CD4-positive, alpha-beta memory T cell (primary cell): ENCODE measurements at regions of chr20 and their contacts with region 1.

Region 1: DNA sequence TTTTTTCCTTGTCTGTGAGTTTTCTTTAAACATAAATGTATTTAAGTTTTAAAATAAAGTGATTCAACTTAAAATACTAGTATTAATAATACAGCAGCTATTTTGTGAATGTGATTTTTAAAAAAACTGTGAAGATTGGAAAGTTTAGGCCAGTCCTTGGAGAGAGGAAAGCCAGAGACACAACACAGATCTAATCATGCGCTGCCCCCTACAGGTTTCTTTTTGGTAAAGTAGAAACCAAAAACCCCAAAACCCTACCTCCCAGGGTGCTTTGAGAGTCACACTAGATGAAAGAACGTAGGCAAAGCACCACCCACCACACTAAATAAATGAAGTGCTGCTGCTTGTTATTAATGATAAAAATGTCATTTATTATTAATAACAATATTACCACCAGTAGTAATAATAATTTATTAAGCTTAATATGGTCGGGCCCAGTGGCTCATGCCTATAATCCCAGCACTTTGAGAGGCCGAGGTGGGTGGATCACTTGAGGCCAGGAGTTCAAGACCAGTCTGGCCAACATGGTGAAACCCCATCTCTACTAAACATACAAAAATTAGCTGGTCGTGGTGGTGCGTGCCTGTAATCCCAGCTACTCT is 33.7 kb downstream of the SLC9A8 start:
- DNase-seq: peak; percentile 51 to 65 (median 61)
- H3K4me3 ChIP-seq: no peak overlapping the region
- H3K4me3 Mint-ChIP-seq: no peak overlapping the region
- H3K27ac ChIP-seq: no peak overlapping the region
- H3K27ac Mint-ChIP-seq: no peak overlapping the region
- H3K4me1 ChIP-seq: peaks cover 12% of the 10 kb centered on the region
- H3K4me1 Mint-ChIP-seq: peaks cover 5 to 17% (median 12%) of the 10 kb centered on the region in 4 donors
- H3K27me3 ChIP-seq: no peaks in the 10 kb centered on the region
- H3K27me3 Mint-ChIP-seq: no peaks in the 10 kb centered on the region

Region 2: GRCh38 chr20:49534255-49534712 is 312.0 kb before region 1 on chr20:
- CTCF ChIA-PET with region 1: no interaction called
- POLR2A ChIA-PET with region 1: no interaction called
- intact Hi-C with region 1: loop called (anchors 5 kb)
- DNase-seq: peak; percentile 39 to 54 (median 43)
- H3K4me3 ChIP-seq: no peak overlapping the region
- H3K4me3 Mint-ChIP-seq: peak overlapping the region in 2 of 8 donors; percentile 40 to 61
- H3K27ac ChIP-seq: no peak overlapping the region
- H3K27ac Mint-ChIP-seq: peak overlapping the region in 1 of 7 donors; percentile 18
- H3K4me1 ChIP-seq: peaks cover 11% of the 10 kb centered on the region
- H3K4me1 Mint-ChIP-seq: peaks cover 4 to 15% (median 11%) of the 10 kb centered on the region in 4 donors
- H3K27me3 ChIP-seq: no peaks in the 10 kb centered on the region
- H3K27me3 Mint-ChIP-seq: peaks cover 2 to 6% of the 10 kb centered on the region in 2 donors

Region 3: GRCh38 chr20:49610701-49611538 is 235.4 kb before region 1 on chr20:
- CTCF ChIA-PET with region 1: interaction called, 70 read pairs
- POLR2A ChIA-PET with region 1: no interaction called
- intact Hi-C with region 1: loop called (anchors 1 kb)
- DNase-seq: peak; percentile 67 to 75 (median 69)
- H3K4me3 ChIP-seq: no peak overlapping the region
- H3K4me3 Mint-ChIP-seq: peak overlapping the region; percentile 29 to 66 (median 48)
- H3K27ac ChIP-seq: no peak overlapping the region
- H3K27ac Mint-ChIP-seq: peak overlapping the region in 2 of 7 donors; percentile 25 to 35
- H3K4me1 ChIP-seq: peaks cover 14% of the 10 kb centered on the region
- H3K4me1 Mint-ChIP-seq: peaks cover 11 to 17% (median 15%) of the 10 kb centered on the region in 4 donors
- H3K27me3 ChIP-seq: no peaks in the 10 kb centered on the region
- H3K27me3 Mint-ChIP-seq: peaks cover 6% of the 10 kb centered on the region in 2 donors

Region 4: GRCh38 chr20:49668181-49668877 is 178.0 kb before region 1 on chr20:
- CTCF ChIA-PET with region 1: interaction called, 11 read pairs
- POLR2A ChIA-PET with region 1: no interaction called
- intact Hi-C with region 1: no loop called
- DNase-seq: peak; percentile 75 to 93 (median 80)
- H3K4me3 ChIP-seq: peak overlapping the region in 1 of 2 donors; percentile 32
- H3K4me3 Mint-ChIP-seq: peak overlapping the region; percentile 76 to 88 (median 84)
- H3K27ac ChIP-seq: peak overlapping the region; percentile 51
- H3K27ac Mint-ChIP-seq: peak overlapping the region; percentile 20 to 93 (median 91)
- H3K4me1 ChIP-seq: peaks cover 51% of the 10 kb centered on the region
- H3K4me1 Mint-ChIP-seq: peaks cover 29 to 65% (median 44%) of the 10 kb centered on the region in 4 donors
- H3K27me3 ChIP-seq: no peaks in the 10 kb centered on the region
- H3K27me3 Mint-ChIP-seq: no peaks in the 10 kb centered on the region

Region 5: DNA sequence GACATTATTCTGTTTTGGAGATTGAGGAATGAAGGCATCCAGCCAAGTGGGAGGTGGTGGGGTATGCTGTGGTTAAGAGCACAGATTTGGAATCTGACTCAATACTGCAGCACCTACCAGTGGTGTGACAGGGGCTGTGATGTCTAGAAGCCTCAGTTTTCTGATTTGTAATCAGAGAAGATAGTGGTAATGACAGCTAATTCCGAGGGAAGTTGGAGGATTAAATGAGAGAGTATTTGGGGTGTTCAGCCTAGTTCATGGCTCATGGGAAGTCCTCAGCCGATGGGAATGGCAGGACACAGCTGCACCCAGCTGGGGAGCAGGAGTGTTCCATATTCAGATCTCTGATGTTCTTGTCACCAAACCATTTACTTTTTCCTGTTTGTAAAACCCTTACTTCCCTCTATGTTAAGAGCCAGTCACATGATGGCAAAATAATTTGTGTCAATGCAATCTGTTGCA is 24.4 kb before region 1 on chr20:
- CTCF ChIA-PET with region 1: interaction called, 11 read pairs
- POLR2A ChIA-PET with region 1: no interaction called
- intact Hi-C with region 1: no loop called
- DNase-seq: no peak
- H3K4me3 ChIP-seq: no peak overlapping the region
- H3K4me3 Mint-ChIP-seq: peak overlapping the region in 3 of 8 donors; percentile 6 to 33 (median 22)
- H3K27ac ChIP-seq: no peak overlapping the region
- H3K27ac Mint-ChIP-seq: peak overlapping the region; percentile 23 to 91 (median 83)
- H3K4me1 ChIP-seq: peaks cover 50% of the 10 kb centered on the region
- H3K4me1 Mint-ChIP-seq: peaks cover 42 to 59% (median 47%) of the 10 kb centered on the region in 4 donors
- H3K27me3 ChIP-seq: no peaks in the 10 kb centered on the region
- H3K27me3 Mint-ChIP-seq: no peaks in the 10 kb centered on the region